Posterior cingulate gyrus (tissue), 11 donors: ENCODE measurements at regions of chr13 and their contacts with region 1.

Region 1: DNA sequence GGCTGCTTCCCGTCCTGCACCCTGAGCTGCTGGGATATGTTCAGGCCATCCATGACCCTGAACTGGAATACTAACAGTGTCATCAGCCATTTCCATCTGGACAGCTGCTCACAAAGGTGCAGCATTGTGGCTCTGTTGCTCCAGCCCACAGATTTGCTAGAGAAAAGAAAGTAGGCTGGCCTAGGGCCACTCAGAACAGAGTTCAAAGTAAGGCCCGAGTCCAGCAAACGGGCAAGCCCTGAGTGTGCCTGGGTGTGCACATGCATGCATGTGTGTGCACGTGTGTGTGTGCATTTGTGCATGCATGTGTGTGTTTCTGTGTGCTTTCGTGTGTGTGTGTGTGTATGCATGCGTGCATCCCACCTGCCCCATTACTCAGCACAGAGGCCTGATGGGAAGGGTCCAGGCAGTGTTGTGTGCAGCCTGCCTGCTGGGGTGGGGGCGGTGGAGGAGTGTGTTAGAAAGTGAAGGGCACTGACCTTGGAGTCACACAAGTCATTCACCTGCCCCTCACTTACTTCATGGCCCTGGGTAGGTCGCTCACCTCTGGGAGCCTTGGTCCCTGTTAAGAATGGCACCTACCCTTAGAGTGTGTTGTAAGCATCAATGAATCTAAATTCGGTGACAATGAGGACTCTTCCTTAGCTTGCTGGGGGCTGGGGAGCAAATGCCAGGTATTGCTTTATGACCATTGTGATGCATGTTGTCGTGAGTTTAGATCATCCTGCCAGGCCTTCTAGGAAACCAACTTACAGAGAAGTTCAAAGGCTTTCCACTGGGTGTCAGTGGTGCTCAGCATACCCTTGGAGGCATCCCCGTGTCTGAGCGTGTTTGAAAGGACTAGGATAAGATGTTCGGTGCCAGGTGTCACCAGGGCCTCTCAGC is 53.2 kb downstream of the GPR12 start:
- DNase-seq: peak in 8 of 10 donors; percentile 49 to 92 (median 60)

Region 2: GRCh38 chr13:26872525-26873385 is 165.4 kb after region 1 on chr13:
- intact Hi-C with region 1: loop called (anchors 1 kb)
- DNase-seq: peak; percentile 27 to 96 (median 80)

Region 3: GRCh38 chr13:26929971-26930730 is 222.8 kb after region 1 on chr13:
- intact Hi-C with region 1: loop called (anchors 1 kb)
- DNase-seq: peak; percentile 66 to 97 (median 88)

Region 4: DNA sequence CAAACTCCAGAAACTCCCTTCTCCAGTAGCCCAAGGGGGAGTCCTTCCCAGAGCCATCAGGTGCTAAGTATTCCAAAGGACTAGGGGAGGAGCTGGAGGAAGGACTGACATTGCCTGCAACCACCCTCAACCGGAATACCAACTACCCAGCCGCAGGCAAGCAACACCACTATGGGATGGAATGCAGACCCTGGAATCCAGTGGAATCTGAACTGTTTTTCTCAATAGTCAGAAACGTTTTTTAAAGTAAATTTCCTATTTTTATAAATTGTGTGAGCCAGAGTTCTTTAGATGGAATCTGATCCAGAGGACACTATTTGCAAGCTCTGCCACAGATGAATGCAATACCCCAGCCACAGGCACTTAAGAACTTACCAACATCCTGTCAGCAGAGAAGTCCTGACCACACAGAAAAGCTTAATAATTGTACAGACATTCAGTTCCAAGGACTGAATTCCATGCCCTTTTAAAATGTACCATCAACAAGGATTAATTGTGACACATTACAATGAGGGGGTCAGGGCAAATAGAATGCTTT is 372.1 kb after region 1 on chr13:
- intact Hi-C with region 1: no loop called
- DNase-seq: no peak